A673 (cell line): ENCODE measurements at regions of chr6 and their contacts with region 1.

Region 1: GRCh38 chr6:160930547-160931377 is 60.8 kb upstream of the MAP3K4 start:
- DNase-seq: peak; percentile 69
- H3K4me3 ChIP-seq: peak overlapping the region; percentile 33
- H3K27ac ChIP-seq: no peak overlapping the region
- H3K4me1 ChIP-seq: no peaks in the 10 kb centered on the region
- H3K27me3 ChIP-seq: peaks cover 6% of the 10 kb centered on the region
- CTCF ChIP-seq: peak; percentile 95

Region 2: GRCh38 chr6:160992061-160992979 is 61.6 kb after region 1 on chr6:
- CTCF ChIA-PET with region 1: interaction called, 3 read pairs
- POLR2A ChIA-PET with region 1: no interaction called
- intact Hi-C with region 1: loop called (anchors 2 kb)
- DNase-seq: peak; percentile 79
- H3K4me3 ChIP-seq: peak overlapping the region; percentile 87
- H3K27ac ChIP-seq: peak overlapping the region; percentile 86
- H3K4me1 ChIP-seq: no peaks in the 10 kb centered on the region
- H3K27me3 ChIP-seq: no peaks in the 10 kb centered on the region
- CTCF ChIP-seq: peak; percentile 77

Region 3: DNA sequence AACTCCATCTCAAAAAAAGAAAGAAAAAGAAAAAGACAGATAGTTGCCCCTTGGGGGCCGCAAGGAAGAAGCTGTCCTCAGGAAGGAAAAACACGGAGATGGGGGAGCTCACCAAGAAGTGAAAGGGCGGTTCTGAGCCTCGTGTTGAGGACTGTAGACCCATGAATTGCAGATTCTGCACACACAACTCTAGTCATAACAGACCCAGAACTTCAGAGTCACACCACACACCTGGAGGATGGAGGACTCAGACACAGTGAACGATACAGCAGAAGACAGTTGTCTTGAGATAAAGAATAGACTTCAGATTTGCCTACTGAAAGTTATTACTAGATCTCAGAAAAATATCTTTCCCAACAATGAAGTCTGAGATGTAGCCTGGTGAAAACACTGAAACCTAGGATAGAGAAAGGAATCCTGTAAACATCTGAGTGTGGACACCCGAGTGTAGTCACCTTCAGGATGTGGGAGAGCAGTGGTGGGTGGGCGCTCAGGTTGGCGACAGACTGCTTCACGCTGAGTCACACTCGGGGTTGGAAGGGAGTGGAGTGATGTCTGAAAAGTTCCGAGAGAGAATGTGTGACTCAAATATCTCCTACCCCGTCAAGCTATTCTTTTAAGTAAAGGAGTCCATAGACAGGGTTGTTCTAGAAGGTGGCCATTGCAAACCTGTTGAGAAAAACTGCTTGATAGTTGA is 149.0 kb after region 1 on chr6:
- CTCF ChIA-PET with region 1: no interaction called
- POLR2A ChIA-PET with region 1: no interaction called
- intact Hi-C with region 1: loop called (anchors 10 kb)
- DNase-seq: no peak
- H3K4me3 ChIP-seq: no peak overlapping the region
- H3K27ac ChIP-seq: no peak overlapping the region
- H3K4me1 ChIP-seq: no peaks in the 10 kb centered on the region
- H3K27me3 ChIP-seq: no peaks in the 10 kb centered on the region
- CTCF ChIP-seq: no peak

Region 4: DNA sequence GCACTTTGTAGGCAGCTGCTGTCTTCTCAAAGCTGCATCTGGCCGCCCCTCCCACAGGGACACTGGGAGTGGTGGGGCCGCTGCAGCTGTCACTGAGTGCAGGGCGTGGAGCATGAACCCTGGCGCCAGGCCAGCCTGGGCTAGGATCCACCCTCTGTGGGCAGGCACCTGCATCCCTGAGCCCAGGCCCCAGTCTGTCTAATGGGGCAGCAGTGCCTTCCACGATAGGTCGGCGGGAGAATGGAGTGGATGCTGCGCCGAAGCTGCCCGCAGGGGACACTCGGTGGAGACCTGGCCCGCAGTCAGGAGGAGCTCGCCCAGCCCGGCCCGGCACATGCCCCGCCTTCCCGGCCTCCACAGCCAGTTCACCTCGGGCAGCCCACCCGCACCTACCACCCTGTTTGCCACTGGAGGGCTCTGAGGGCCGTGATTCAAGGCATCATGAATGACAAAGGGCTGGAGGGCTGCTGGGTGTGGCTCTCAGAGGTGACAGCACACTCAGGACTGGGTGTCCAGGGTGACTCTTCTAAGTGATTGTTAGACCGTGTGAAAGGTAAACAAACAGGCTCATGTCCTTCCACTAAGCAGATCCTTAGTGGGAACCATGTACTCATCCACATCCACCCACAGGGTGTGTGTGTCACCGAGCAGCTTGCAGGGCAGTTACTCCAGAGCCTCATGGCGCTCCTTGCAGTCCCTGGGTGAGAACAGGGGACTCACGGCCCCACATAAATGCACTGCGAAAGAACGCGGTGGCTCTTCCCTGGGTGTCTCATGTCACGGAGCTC is 209.2 kb after region 1 on chr6:
- CTCF ChIA-PET with region 1: no interaction called
- POLR2A ChIA-PET with region 1: no interaction called
- intact Hi-C with region 1: loop called (anchors 10 kb)
- DNase-seq: no peak
- H3K4me3 ChIP-seq: no peak overlapping the region
- H3K27ac ChIP-seq: no peak overlapping the region
- H3K4me1 ChIP-seq: peaks cover 6% of the 10 kb centered on the region
- H3K27me3 ChIP-seq: no peaks in the 10 kb centered on the region
- CTCF ChIP-seq: no peak